Mammary epithelial cell (primary cell): ENCODE measurements at regions of chr6 and their contacts with region 1.

Region 1: GRCh38 chr6:41779793-41780545 is at the start of gene FRS3:
- DNase-seq: peak; percentile 83
- H3K4me3 ChIP-seq: peak within 1 kb of the TSS; percentile 61 to 74 (median 68)
- H3K27ac ChIP-seq: no peak within 1 kb of the TSS
- H3K4me1 ChIP-seq: peaks cover 25% of the 10 kb centered on the region
- H3K27me3 ChIP-seq: no peaks in the 10 kb centered on the region
- CTCF ChIP-seq: peak; percentile 81 to 98
- total RNA-seq, gene FRS3: 1.3 to 4.8 TPM

Region 2: GRCh38 chr6:41386594-41386993 is 393.4 kb before region 1 on chr6:
- CTCF ChIA-PET with region 1: no interaction called
- dilution Hi-C with region 1: loop called (anchors 10 kb)
- in situ Hi-C with region 1: no loop called
- intact Hi-C with region 1: no loop called
- DNase-seq: no peak
- H3K4me3 ChIP-seq: no peak overlapping the region
- H3K27ac ChIP-seq: no peak overlapping the region
- H3K4me1 ChIP-seq: no peaks in the 10 kb centered on the region
- H3K27me3 ChIP-seq: peaks cover 15% of the 10 kb centered on the region
- CTCF ChIP-seq: no peak

Region 3: GRCh38 chr6:41655711-41656691 is 124.0 kb before region 1 on chr6:
- CTCF ChIA-PET with region 1: no interaction called
- dilution Hi-C with region 1: no loop called
- in situ Hi-C with region 1: no loop called
- intact Hi-C with region 1: no loop called
- DNase-seq: peak; percentile 48
- H3K4me3 ChIP-seq: no peak overlapping the region
- H3K27ac ChIP-seq: no peak overlapping the region
- H3K4me1 ChIP-seq: no peaks in the 10 kb centered on the region
- H3K27me3 ChIP-seq: no peaks in the 10 kb centered on the region
- CTCF ChIP-seq: no peak

Region 4: GRCh38 chr6:41683510-41684310 is 96.3 kb before region 1 on chr6:
- CTCF ChIA-PET with region 1: no interaction called
- dilution Hi-C with region 1: no loop called
- in situ Hi-C with region 1: no loop called
- intact Hi-C with region 1: loop called (anchors 1 kb)
- DNase-seq: peak; percentile 39
- H3K4me3 ChIP-seq: no peak overlapping the region
- H3K27ac ChIP-seq: no peak overlapping the region
- H3K4me1 ChIP-seq: peaks cover 3% of the 10 kb centered on the region
- H3K27me3 ChIP-seq: no peaks in the 10 kb centered on the region
- CTCF ChIP-seq: peak; percentile 75 to 85

Region 5: DNA sequence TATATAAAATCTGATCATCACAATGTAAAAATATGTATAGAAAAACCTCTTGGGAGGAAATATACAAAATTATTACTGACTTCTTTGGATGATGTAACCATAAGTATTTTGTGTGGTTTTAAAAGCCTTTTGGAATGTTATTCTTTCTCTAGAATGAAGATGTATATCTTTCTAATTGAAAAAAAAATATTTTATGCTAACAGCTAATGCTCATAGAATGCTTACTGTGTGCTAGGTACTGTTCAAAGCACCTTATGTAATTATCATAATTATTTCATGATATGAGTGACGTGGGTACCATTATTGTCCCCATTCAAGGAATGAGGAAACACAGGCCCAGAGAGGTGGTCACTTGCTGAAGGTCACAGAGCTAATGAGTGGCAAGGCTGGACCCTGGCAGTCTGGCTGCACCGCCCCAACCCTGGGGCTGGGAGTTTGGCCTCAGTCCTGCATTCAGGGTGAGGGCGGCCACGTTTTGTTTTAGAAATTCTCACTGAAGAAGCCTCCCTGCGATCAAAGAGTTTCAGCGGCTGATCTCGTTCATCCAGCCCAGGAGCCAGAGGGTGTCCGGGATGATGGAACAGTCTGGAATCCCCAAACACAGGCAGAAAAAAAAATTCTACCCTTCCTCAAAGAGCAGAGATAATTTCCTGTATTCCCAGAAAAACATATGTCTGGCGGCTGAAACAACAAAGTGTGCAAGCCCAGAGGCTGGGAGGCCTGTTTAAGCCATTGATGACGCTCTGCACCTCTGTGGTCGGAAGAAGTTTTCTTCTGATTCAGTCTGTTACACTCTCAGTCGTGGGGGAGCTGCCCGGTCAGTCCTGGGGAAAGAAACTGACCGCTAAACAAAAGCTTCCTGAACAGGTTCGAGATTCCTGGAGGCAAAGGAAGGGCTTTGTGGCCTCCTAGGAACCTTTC is 81.8 kb before region 1 on chr6:
- CTCF ChIA-PET with region 1: no interaction called
- dilution Hi-C with region 1: loop called (anchors 5 kb)
- in situ Hi-C with region 1: loop called in 1 of 2 experiments (anchors 10 kb)
- intact Hi-C with region 1: loop called (anchors 2 kb)
- DNase-seq: peak; percentile 81
- H3K4me3 ChIP-seq: no peak overlapping the region
- H3K27ac ChIP-seq: peak overlapping the region; percentile 89
- H3K4me1 ChIP-seq: peaks cover 26% of the 10 kb centered on the region
- H3K27me3 ChIP-seq: no peaks in the 10 kb centered on the region
- CTCF ChIP-seq: no peak

Region 6: DNA sequence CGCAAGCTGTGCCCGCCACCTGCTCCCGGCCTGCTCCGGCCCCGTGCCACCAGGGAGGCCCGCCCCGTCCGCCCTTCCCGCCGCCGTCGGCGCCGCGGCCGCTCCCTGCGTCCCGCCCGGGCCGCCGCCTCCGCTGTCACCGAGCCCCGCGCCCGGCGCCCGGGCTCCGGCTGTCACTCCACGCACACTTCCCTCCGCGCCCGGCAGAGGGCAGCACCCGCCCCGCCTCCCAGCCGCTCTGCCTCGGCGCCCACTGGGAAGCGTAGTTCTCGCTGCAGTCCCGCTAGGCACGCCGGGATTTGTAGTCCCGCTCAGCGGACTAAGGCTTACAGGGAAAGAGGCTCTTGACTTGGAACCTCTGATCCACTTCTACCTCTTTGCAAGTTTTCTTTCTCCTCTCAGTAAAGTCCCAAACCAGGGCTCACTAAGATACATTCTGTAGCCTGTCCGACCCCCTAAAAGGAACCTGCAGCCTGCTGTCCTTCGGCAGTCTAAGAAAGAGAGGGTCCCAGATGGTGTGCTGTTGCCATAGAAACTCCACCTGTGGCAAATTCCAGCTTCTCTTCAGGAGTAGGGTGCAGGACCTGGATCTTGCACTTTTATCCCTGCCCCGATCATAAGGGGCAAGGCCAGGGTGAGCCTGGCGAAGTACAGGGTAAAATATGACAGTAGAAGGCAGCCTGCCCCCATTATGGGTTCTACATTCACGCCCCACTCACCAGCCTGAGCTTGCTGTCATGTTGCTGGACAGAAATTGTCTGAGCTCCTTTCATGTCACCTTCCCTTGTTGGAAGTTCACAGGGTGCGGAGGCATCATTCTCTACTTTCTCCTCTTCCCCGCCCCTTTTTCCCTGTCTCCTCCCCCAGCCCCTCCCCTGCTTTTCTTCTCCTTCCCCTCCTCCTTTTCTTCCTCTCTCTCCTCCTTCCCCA is 44.3 kb before region 1 on chr6 and contains the start of gene TFEB:
- CTCF ChIA-PET with region 1: no interaction called
- dilution Hi-C with region 1: no loop called
- in situ Hi-C with region 1: no loop called
- intact Hi-C with region 1: loop called (anchors 1 kb)
- DNase-seq: peak; percentile 84
- H3K4me3 ChIP-seq: peak within 1 kb of the TSS; percentile 48 to 85 (median 75)
- H3K27ac ChIP-seq: peak within 1 kb of the TSS; percentile 14
- H3K4me1 ChIP-seq: peaks cover 33% of the 10 kb centered on the region
- H3K27me3 ChIP-seq: no peaks in the 10 kb centered on the region
- CTCF ChIP-seq: peak; percentile 82
- total RNA-seq, gene TFEB: 25.9 to 29.0 TPM